ENCODE measurements at regions of chr9 and their contacts with region 1.

Region 1: DNA sequence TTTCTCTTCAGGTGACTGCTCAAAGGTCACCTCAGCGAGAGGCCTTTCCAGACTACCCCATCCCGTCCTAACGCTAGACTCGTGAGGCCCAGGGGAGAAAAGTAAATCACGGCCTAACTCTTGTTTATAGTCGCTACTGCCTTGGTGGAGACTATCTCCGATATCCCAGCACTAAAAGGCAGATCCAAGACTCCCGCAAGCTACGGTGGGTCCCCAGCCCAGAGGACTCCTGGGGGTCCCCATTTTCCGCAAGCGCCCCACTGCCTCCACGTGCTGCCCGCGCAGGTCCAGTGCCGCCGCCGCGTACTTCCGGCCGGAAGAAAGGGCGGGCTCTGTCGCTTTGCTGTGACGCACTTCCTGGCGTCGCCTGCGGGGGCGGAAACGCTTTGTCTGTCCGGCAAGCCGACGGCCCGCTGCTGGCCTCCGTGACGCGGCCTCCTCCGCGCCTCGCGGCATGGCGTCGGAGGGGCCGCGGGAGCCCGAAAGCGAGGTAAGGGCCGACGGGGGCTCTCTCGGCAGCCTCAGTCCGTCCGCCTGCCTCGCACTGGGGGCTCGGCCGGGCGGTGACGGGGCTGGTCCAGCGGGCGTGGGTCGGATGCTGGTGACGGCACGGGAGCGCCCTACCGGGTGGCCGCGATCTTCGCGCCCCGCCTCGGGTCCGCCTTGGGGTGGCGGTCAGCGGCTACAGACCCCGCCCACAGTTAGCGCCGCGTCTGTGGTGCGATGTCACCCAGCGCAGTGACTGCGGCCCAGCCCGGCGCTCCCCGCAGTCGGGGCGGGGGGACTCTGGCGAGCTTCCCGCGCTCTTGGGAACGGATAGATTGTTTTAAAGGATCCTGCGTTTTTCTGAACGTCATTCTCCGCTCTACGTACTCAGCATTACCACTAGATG is at the start of gene SECISBP2:
- DNase-seq: peak; percentile 94
- H3K4me3 ChIP-seq: peak within 1 kb of the TSS; percentile 68
- H3K4me1 ChIP-seq: peaks cover 41% of the 10 kb centered on the region
- H3K27me3 ChIP-seq: no peaks in the 10 kb centered on the region

Region 2: DNA sequence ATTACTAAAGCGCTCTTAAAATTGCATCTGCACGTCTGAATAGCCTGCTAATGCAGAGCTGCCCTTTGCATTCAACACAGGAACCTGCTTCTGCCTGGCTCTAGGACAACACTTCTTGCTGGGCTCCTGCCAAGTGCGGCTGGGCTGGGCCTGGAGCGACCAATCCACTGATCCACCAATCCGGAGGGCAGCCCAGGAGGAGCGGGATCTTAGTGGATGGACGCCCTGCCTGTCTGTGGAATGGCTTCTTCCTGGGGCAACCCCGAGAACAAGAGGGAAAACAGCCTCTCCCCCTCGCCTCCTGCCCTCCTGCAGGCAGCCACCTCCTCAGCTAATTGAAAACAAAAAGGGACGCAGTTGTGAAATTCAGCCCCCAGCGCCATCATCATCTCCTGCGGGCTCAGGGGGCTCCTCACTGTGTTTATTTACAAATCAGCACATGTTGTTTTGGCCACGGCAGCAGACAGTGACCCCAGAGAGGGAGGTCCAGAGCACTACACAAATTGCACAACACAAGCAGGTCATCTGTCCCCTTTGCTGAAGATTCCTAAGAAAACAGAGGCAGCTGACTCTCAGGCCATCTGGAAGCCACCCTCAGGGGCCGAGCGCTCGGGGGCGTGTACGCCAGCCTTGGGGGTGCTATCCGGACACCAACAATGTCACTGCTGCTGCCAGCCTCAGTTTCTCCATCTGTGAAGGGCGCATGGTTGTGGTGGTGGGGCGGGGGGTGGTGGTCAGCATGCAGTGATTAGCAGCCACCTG is 343.8 kb after region 1 on chr9:
- in situ Hi-C with region 1: loop called (anchors 25 kb)
- DNase-seq: peak; percentile 85 to 98
- H3K4me3 ChIP-seq: no peak overlapping the region; the same call in 1 of the 2 replicates
- H3K4me1 ChIP-seq: peaks cover 12% of the 10 kb centered on the region
- H3K27me3 ChIP-seq: no peaks in the 10 kb centered on the region

Measured in HAP-1 (cell line).